ENCODE measurements at regions of chr7 and their contacts with region 1.

Region 1: GRCh38 chr7:34184466-34184865 is 279.1 kb downstream of the BMPER start:
- DNase-seq: no peak
- H3K4me3 ChIP-seq: no peak overlapping the region
- H3K27ac ChIP-seq: no peak overlapping the region
- H3K4me1 ChIP-seq: no peaks in the 10 kb centered on the region
- H3K27me3 ChIP-seq: no peaks in the 10 kb centered on the region
- CTCF ChIP-seq: peak; percentile 16 to 18

Region 2: GRCh38 chr7:34117573-34117972 is 66.9 kb before region 1 on chr7:
- CTCF ChIA-PET with region 1: no interaction called
- dilution Hi-C with region 1: no loop called
- in situ Hi-C with region 1: no loop called
- intact Hi-C with region 1: no loop called
- DNase-seq: no peak
- H3K4me3 ChIP-seq: no peak overlapping the region
- H3K27ac ChIP-seq: no peak overlapping the region
- H3K4me1 ChIP-seq: no peaks in the 10 kb centered on the region
- H3K27me3 ChIP-seq: no peaks in the 10 kb centered on the region
- CTCF ChIP-seq: no peak

Region 3: GRCh38 chr7:34143402-34143801 is 41.1 kb before region 1 on chr7:
- CTCF ChIA-PET with region 1: no interaction called
- dilution Hi-C with region 1: loop called (anchors 5 kb)
- in situ Hi-C with region 1: no loop called
- intact Hi-C with region 1: no loop called
- DNase-seq: peak; percentile 32
- H3K4me3 ChIP-seq: no peak overlapping the region
- H3K27ac ChIP-seq: no peak overlapping the region
- H3K4me1 ChIP-seq: no peaks in the 10 kb centered on the region
- H3K27me3 ChIP-seq: peaks cover 3% of the 10 kb centered on the region
- CTCF ChIP-seq: no peak

Region 4: DNA sequence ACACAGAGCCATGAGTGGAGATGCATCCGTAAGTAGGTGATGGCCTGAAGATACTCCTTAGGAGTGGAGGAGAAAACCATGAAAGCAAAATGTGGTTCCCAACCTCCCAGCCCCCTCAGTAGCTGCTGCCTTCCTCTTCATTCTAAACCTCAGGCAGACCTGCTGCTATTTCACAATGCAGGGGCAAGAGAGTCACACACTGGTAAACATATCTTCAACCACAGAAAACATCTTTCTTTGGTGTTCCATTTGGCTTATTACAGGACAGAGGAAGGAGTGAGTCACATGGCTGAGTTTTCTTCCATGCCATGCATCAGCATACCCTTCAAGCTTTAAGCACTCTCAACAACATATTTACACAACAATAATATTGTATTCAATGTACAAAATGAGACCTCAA is 63.0 kb after region 1 on chr7:
- CTCF ChIA-PET with region 1: no interaction called
- dilution Hi-C with region 1: loop called (anchors 10 kb)
- in situ Hi-C with region 1: no loop called
- intact Hi-C with region 1: no loop called
- DNase-seq: peak; percentile 32
- H3K4me3 ChIP-seq: no peak overlapping the region
- H3K27ac ChIP-seq: no peak overlapping the region
- H3K4me1 ChIP-seq: no peaks in the 10 kb centered on the region
- H3K27me3 ChIP-seq: no peaks in the 10 kb centered on the region
- CTCF ChIP-seq: no peak